ENCODE measurements at regions of chr5 and their contacts with region 1.

Region 1: DNA sequence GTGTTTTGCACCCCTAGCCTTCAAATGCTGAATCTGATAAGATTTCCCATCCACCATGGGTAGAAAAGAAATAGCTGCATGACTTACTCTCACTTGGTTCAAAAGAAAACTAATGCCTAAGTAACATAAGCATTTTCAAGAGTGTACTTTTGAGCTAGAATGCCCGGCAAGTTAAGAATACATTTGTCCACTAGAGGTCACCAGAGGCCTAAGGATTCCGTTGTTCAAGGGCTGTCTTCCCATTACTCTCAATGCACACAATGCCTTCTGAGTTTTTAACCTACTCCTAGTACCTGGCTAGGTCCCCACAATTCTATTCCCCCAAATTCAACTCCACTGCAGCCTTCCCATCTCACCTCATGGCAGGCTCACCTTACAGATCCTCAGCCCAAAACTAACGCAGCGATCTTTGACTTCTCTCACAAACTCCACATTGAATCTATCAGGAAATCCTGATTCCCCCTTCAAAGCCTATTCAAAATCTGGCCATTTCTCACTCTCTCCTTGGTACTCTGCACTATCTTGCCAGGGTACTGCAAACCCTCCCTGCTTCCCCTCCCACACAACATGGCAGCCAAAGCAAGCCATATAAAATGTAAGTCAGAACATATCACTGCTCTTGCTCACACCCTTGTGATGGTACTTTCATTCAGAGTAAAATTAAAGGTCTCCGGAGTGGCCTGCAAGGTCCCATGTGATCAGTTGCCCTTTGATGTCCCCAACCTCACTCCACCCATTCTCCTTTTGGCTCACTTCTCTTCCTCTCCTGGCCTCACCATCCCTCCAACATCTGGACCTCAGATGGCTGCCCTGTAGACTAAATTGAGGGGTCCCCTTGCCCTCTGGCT is 13.4 kb downstream of the OXCT1 start:
- DNase-seq: no peak
- H3K4me3 ChIP-seq: no peak overlapping the region
- H3K27ac ChIP-seq: no peak overlapping the region
- H3K4me1 ChIP-seq: peaks cover 0 to 7% (median 3%) of the 10 kb centered on the region in 4 donors
- H3K27me3 ChIP-seq: no peaks in the 10 kb centered on the region
- CTCF ChIP-seq: peak; percentile 65 to 78 (median 76)
- EP300 ChIP-seq: no peak
- POLR2A ChIP-seq: no peak

Region 2: GRCh38 chr5:41371741-41372140 is 485.1 kb before region 1 on chr5:
- intact Hi-C with region 1: no loop called
- DNase-seq: no peak
- H3K4me3 ChIP-seq: no peak overlapping the region
- H3K27ac ChIP-seq: no peak overlapping the region
- H3K4me1 ChIP-seq: peaks cover 0 to 17% (median 0%) of the 10 kb centered on the region in 4 donors
- H3K27me3 ChIP-seq: no peaks in the 10 kb centered on the region
- CTCF ChIP-seq: no peak
- EP300 ChIP-seq: no peak
- POLR2A ChIP-seq: no peak

Region 3: GRCh38 chr5:41683181-41683580 is 173.7 kb before region 1 on chr5:
- intact Hi-C with region 1: no loop called
- DNase-seq: no peak
- H3K4me3 ChIP-seq: no peak overlapping the region
- H3K27ac ChIP-seq: no peak overlapping the region
- H3K4me1 ChIP-seq: no peaks in the 10 kb centered on the region
- H3K27me3 ChIP-seq: no peaks in the 10 kb centered on the region
- CTCF ChIP-seq: no peak
- EP300 ChIP-seq: no peak
- POLR2A ChIP-seq: no peak

Region 4: DNA sequence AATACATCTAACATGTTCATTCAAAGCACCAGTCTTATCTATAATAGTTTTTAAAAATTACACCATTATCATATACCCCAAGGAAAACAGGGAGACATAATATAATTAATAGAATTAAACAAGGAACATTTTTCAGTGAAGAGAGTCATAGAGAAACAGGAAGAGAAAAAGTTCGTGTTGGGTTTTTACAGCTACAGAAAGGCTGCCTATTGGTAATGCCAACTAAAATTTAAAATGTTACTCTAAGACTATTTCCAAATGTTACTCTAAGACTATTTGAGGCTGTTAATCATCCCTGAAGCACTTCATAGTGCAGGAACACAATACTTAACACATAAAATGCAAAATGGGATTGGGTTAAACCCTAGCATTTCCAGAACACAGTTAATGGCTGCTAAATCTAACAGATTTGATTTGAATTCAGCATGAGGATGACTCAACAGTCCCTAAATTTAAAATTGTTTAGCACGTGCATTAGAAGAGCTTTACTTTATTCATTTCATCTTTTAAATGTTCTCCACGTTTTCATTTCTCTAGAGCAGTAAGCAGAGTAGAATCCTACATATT is 41.1 kb before region 1 on chr5:
- intact Hi-C with region 1: no loop called
- DNase-seq: no peak
- H3K4me3 ChIP-seq: no peak overlapping the region
- H3K27ac ChIP-seq: no peak overlapping the region
- H3K4me1 ChIP-seq: no peaks in the 10 kb centered on the region
- H3K27me3 ChIP-seq: no peaks in the 10 kb centered on the region
- CTCF ChIP-seq: no peak
- EP300 ChIP-seq: no peak
- POLR2A ChIP-seq: no peak

Region 5: DNA sequence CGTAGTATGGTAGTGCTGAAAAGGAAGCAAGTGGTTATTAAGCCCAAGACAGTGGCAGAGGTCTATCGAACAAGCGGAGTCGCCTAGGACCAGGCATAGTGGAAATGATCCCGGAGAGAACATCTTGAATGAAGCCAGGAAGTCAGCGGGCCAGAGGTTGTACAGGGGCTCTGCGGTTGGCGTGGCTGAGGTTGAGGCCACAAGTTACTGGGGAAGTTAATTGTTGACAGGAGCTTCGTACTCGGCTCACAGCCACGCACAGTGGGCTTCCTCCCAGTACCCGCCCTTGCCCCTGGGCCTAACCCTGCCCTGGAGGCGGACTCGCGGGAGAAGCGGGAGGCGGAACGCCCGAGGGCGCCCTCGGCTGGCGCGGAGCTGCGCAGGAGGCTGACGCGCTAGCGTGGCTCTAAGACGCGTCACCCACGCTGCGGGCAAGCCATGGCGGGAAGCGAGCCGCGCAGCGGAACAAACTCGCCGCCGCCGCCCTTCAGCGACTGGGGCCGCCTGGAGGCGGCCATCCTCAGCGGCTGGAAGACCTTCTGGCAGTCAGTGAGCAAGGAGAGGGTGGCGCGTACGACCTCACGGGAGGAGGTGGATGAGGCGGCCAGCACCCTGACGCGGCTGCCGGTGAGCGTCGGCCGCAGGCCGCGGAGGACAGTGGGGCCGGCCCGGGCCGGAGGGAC is 68.1 kb after region 1 on chr5 and contains the start of gene FBXO4:
- intact Hi-C with region 1: loop called (anchors 2 kb)
- DNase-seq: peak; percentile 94
- H3K4me3 ChIP-seq: peak within 1 kb of the TSS; percentile 73 to 88 (median 74)
- H3K27ac ChIP-seq: peak within 1 kb of the TSS; percentile 91 to 97 (median 94)
- H3K4me1 ChIP-seq: peaks cover 6 to 17% (median 13%) of the 10 kb centered on the region in 4 donors
- H3K27me3 ChIP-seq: no peaks in the 10 kb centered on the region
- CTCF ChIP-seq: peak; percentile 46 to 64 (median 47)
- EP300 ChIP-seq: no peak
- POLR2A ChIP-seq: no peak
- total RNA-seq, gene FBXO4: 5.1 to 8.8 (median 7.5) TPM

Region 6: DNA sequence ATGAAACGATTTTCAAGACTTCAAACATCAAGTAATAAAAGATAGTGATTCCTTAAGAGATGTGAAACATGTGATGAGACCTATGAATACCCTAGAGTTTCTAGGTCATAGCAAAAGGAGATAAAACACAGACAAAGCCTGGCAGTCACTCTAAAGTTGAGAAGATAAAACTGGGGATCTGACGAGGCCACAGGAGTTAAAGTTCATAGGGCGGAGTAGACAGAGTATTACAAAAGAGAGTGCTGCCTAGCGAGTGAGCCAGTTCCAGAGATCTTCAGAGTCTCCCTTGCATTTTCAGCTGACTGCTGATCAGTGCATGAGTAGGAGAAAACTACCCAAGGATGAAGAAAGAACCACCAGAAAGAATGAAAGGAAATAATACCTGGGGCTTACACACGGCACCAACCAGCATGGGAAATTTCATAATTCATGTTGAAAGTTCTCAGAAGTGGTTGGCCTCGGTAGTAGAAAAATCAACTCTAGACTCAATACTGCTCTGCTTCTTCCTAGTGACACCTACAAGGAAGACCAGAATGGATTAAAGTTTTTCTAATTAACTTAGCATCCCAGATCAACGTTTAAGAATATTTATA is 98.7 kb after region 1 on chr5:
- intact Hi-C with region 1: no loop called
- DNase-seq: no peak
- H3K4me3 ChIP-seq: no peak overlapping the region
- H3K27ac ChIP-seq: no peak overlapping the region
- H3K4me1 ChIP-seq: no peaks in the 10 kb centered on the region
- H3K27me3 ChIP-seq: no peaks in the 10 kb centered on the region
- CTCF ChIP-seq: no peak
- EP300 ChIP-seq: no peak
- POLR2A ChIP-seq: no peak

Region 7: GRCh38 chr5:42894057-42894456 is 1037.2 kb after region 1 on chr5:
- intact Hi-C with region 1: loop called (anchors 10 kb)
- DNase-seq: no peak
- H3K4me3 ChIP-seq: no peak overlapping the region
- H3K27ac ChIP-seq: no peak overlapping the region
- H3K4me1 ChIP-seq: no peaks in the 10 kb centered on the region
- H3K27me3 ChIP-seq: peaks cover 0 to 11% (median 0%) of the 10 kb centered on the region in 4 donors
- CTCF ChIP-seq: no peak
- EP300 ChIP-seq: no peak
- POLR2A ChIP-seq: no peak

Measured in esophagus muscularis mucosa (tissue), 4 donors.